Activated T-helper 1 cell treated with anti-CD3 and anti-CD28 coated beads, Interleukin-12 subunit alpha, Interleukin-12 subunit beta, Interleukin-2, Interleukin-4 antibody, amounts not matched to agents 30 ng/mL and 10 ng/mL and 1 ng/mL, durations not matched to agents 14 hours and 24 hours and 36 hours (primary cell): ENCODE measurements at regions of chr2 and their contacts with region 1.

Region 1: DNA sequence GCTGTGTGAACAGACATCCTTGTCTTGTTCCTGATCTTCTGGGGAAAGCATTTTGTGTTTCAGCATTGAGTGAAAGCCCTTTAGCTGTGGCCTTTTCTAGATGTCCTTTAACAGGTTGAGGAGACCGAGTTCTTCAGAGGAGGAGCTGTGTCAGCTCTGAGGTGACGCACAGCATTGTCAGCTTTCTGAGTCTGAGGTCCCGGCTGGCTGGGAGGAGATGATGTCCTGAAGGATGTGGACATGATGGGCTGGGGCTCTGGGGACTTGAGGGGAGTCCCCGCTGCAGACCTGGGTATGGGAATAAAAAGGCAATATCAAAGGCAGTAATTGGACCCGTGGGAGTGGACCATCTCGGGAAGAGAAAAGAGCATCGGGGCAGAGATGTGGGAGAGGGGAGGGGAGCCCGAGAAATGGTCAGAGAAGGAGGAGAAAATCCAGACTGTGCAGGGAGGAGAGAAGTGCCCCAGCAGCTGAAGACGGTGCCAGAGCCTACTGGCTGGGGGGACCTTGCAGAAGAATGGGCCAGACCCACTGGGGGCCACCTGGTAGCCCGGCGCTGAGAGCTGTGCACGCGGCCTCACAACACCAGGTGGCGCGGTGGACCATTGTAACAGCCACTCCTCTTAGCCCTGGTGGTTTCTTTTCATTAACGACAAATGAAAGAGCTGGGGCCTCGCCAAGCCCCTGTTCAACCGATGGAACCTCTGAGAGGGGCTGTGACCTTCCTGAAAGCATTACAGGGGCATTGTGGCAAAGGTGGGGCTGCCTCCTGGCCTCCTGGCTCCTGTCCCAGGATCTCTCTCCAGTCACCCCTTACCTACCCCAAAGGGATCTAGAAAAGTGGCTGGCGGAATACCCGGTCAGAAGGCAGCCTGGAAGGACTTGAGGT is 61.6 kb downstream of the ST3GAL5 start:
- DNase-seq: peak; percentile 70
- H3K4me3 Mint-ChIP-seq: no peak overlapping the region
- H3K27ac Mint-ChIP-seq: no peak overlapping the region
- H3K4me1 Mint-ChIP-seq: peaks cover 40% of the 10 kb centered on the region
- H3K27me3 Mint-ChIP-seq: peaks cover 12% of the 10 kb centered on the region

Region 2: DNA sequence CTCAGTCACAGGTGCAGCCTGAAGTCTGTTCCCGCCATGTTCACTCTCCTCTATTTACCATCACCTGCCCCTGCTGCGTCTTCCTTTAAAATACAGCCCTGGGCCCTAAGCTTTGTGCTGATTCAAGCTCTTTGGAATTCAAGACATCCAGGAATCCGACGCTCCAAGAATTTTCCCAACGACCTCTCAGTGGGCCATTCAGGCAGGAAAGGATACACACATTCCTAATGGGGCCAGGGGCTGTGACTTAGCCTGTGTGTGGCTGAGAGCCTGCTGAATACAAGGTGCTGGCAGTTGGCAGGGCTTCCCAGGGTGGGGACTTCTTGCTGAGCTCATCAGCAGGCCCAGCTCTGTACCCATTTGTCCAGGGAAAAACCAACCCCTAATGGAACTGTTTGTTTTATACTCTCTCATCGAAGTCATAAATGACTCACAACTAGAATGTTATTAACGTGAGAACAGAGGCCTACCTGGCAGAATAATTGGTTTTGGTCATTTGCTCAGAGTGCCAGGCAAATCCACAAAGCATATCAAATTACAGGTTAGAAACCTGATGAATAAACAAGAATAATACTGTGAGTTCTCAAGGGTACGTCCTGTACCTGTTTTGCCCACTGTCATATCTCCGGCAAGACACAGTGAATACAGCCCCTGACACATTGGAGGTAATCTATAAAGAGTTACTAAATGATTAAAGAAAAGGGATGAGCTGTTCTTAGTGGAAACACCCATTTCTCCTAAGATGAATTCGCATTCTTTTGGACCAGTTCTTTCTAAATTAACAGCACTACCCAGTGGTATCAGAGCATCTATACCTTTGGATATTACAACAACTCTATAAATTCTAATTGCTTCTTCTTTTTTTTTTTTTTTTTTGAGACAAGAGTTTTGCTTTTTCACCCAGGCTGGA is 868.8 kb before region 1 on chr2:
- intact Hi-C with region 1: no loop called
- DNase-seq: no peak
- H3K4me3 Mint-ChIP-seq: no peak overlapping the region
- H3K27ac Mint-ChIP-seq: no peak overlapping the region
- H3K4me1 Mint-ChIP-seq: peaks cover 33% of the 10 kb centered on the region
- H3K27me3 Mint-ChIP-seq: no peaks in the 10 kb centered on the region

Region 3: DNA sequence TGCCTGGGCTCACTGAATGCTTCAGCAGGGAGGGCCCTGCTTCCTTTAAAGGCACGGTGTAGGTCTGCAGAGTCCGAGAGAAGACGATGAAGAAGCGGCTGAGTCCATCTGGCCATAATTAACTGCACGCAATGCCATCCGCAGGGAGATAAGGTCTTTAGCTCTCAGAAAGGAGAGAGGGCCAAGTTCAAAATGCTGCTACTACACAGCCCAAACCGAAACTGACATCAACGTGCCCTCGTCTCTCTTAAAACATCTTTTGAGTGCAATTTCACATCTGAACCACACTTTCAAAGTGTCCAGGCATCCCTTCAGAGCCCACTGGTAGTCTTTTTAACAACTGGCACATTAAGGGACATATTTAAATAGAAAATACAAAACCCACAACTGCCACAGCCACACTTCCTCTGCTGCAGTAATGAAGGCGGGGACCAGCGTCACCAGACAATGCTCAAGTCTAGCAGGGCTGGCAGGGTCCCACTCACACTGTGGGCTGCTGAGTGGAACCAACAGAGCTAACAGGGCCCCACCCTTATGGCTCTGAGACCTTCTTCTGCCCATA is 25.8 kb after region 1 on chr2:
- intact Hi-C with region 1: loop called (anchors 2 kb)
- DNase-seq: peak; percentile 46
- H3K4me3 Mint-ChIP-seq: peak overlapping the region; percentile 82
- H3K27ac Mint-ChIP-seq: peak overlapping the region; percentile 99
- H3K4me1 Mint-ChIP-seq: peaks cover 58% of the 10 kb centered on the region
- H3K27me3 Mint-ChIP-seq: no peaks in the 10 kb centered on the region

Region 4: DNA sequence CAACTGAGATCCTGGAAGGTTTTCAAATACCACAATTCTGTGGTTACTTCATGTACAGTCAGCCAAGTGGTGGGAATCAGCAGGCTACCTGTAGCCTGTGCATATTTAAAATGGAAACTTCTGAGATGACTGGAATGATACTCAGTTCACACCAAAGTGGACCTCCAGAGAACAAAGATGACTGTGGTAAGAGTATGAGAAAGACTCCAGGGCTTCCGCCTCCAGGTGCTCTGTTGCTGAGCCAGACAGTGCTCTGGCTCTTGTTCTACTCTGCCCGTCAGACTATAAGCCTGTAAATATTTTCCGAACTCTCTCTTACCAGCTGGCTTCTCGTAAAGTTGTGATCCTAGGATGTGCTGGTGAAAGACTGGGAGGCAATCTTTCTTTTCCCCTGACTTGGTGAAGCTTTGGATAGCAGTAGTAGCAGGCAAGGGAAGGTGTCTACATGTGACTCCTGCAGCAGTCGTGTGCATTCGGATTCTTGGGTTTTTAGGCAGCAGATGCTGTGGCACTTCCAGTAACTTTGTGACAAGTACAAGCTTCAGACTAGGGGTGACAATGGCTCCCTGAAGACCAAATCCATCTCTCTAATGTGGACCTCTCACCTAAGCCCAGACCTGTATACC is 38.4 kb after region 1 on chr2:
- intact Hi-C with region 1: loop called (anchors 2 kb)
- DNase-seq: no peak
- H3K4me3 Mint-ChIP-seq: no peak overlapping the region
- H3K27ac Mint-ChIP-seq: peak overlapping the region; percentile 35
- H3K4me1 Mint-ChIP-seq: peaks cover 49% of the 10 kb centered on the region
- H3K27me3 Mint-ChIP-seq: no peaks in the 10 kb centered on the region

Region 5: GRCh38 chr2:85999061-85999831 is 172.0 kb after region 1 on chr2:
- intact Hi-C with region 1: loop called (anchors 5 kb)
- DNase-seq: peak; percentile 50
- H3K4me3 Mint-ChIP-seq: peak overlapping the region; percentile 50
- H3K27ac Mint-ChIP-seq: peak overlapping the region; percentile 84
- H3K4me1 Mint-ChIP-seq: peaks cover 74% of the 10 kb centered on the region
- H3K27me3 Mint-ChIP-seq: peaks cover 2% of the 10 kb centered on the region

Region 6: DNA sequence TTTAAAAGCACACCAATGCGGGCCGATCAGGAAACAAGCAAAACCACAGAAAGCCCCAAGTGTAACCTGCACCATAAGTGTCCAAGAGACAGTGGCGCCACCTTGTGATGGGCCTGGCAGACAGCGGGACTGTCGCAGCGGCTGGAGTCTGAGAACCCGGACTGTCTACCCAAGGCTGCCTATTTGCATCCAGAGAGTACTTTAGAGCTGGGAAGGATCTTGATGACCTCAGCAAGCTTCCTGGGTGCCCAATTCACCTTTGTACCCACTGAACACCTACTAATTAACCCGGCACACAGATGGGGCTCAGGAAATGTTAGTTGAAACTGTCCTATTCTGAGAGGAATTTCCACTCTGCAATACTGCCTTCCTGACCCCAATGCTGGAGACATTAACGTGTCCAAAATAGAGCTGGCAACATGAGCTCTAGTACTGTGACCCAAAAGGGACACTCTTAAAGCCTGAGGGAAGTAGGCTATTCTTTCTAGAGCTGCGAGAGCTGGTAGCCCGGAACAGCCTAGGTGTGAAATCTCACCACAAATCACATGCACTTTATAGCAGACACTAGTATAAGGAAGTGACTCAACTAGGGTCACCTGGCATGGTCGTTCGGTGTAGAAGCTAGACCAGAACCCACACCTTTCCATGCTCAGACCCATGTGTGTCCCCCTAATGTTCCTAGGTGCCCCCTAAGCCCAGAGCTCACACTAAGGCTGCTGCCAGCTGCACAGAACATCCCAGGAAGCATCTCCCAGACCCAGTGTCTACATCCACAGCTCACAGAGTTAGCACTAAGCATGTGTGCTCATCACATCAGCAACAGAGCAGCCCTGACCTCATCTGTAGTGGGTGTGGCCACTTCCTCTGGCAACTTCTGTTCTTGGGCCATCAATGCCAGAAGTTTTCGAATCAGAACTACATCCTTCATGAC is 253.0 kb after region 1 on chr2:
- intact Hi-C with region 1: loop called (anchors 1 kb)
- DNase-seq: peak; percentile 73
- H3K4me3 Mint-ChIP-seq: no peak overlapping the region
- H3K27ac Mint-ChIP-seq: peak overlapping the region; percentile 71
- H3K4me1 Mint-ChIP-seq: peaks cover 47% of the 10 kb centered on the region
- H3K27me3 Mint-ChIP-seq: no peaks in the 10 kb centered on the region

Region 7: GRCh38 chr2:86105252-86105968 is 278.2 kb after region 1 on chr2 and contains the start of gene POLR1A:
- intact Hi-C with region 1: loop called (anchors 1 kb)
- DNase-seq: peak; percentile 84
- H3K4me3 Mint-ChIP-seq: peak within 1 kb of the TSS; percentile 91
- H3K27ac Mint-ChIP-seq: peak within 1 kb of the TSS; percentile 99
- H3K4me1 Mint-ChIP-seq: peaks cover 55% of the 10 kb centered on the region
- H3K27me3 Mint-ChIP-seq: no peaks in the 10 kb centered on the region
- total RNA-seq, gene POLR1A: 69.7 and 74.6 TPM in 2 replicates

Region 8: GRCh38 chr2:86238354-86238753 is 411.1 kb after region 1 on chr2:
- intact Hi-C with region 1: no loop called
- DNase-seq: peak; percentile 51
- H3K4me3 Mint-ChIP-seq: peak overlapping the region; percentile 21
- H3K27ac Mint-ChIP-seq: peak overlapping the region; percentile 41
- H3K4me1 Mint-ChIP-seq: peaks cover 15% of the 10 kb centered on the region
- H3K27me3 Mint-ChIP-seq: peaks cover 5% of the 10 kb centered on the region

Region 9: DNA sequence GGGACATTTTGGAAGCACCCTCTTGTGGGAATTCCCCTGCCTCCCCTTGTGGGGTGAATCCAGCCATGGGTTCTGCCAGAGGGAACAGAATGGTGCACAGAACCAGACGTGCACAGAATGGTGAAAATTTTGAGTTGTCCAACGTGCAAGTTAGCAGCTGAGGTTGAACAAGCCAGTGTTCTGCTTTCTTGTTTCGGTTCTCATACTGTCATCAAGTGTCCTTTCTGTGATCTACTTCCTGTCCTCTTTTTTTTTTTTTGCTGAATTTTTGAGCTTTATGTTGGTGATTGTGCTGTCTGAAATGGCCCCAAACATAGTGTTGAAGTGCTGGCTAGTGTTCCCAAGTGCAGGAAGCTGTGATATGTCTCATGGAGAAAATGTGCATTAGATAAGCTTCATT is 531.7 kb after region 1 on chr2:
- intact Hi-C with region 1: no loop called
- DNase-seq: no peak
- H3K4me3 Mint-ChIP-seq: no peak overlapping the region
- H3K27ac Mint-ChIP-seq: no peak overlapping the region
- H3K4me1 Mint-ChIP-seq: no peaks in the 10 kb centered on the region
- H3K27me3 Mint-ChIP-seq: peaks cover 3% of the 10 kb centered on the region